Activated T-helper 1 cell treated with anti-CD3 and anti-CD28 coated beads, Interleukin-12 subunit alpha, Interleukin-12 subunit beta, Interleukin-2, Interleukin-4 antibody, amounts not matched to agents 30 ng/mL and 10 ng/mL and 1 ng/mL, durations not matched to agents 14 hours and 24 hours and 36 hours (primary cell): ENCODE measurements at regions of chr4 and their contacts with region 1.

Region 1: DNA sequence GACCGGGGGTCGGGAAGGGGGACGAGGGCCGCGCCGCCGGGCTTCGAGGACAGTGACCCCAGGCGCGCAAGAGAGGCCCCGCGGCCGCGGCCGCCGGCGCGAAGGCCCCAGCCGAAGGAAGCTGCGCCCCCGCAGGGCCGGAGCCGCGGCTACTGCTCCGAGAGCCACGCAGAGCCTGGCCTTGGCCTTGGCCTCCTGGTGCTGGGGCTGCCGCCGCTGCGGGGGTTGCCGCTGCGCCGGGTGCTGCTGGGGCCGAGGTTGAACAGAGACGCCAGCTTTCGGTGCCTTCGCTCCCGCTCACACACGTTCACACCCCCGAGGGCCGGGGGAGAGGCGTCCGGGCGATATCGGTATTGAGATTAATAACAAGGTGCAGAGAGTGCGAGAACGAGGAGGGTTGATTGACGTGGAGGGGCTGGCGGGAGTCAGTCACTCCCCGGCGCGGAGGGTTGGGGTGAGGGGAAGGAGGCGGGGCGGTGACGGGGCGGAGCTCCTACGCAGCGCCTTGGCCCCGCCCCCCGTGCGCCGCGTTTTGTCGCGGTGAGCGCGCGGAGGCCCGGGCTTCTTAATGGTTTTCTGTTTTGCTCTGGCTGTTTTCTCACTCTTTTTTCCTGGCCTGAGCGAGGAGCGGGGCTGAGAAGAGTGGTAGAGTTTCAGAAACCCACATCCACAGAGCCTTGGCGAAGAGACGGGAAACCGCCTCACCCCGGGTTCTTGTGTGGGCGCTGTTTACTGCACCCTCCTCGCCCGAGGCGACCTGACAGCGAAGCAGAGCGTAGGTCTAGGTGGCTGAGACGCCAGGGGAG is 878 bp upstream of the CNOT6L start:
- DNase-seq: peak; percentile 92
- H3K4me3 Mint-ChIP-seq: peak overlapping the region; percentile 91
- H3K27ac Mint-ChIP-seq: peak overlapping the region; percentile 99
- H3K4me1 Mint-ChIP-seq: peaks cover 47% of the 10 kb centered on the region
- H3K27me3 Mint-ChIP-seq: peaks cover 5% of the 10 kb centered on the region

Region 2: DNA sequence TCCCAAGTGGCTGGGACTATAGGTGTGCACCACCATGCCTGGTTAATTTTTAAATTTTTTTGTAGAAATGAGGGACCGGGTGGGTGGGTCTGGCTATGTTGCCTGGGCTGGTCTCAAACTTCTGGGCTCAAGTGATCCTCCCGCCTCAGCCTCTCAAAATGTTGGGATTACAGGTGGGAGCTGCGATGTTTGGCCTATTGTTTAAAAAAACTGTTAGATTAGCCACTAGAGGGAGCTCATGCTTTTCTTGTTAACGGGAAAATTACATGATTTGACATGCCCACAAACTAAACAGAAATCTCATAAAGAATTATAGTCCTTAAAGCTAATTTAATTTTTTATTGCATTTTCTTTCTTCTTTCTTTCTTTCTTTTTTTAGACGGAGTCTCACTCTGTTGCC is 1824.3 kb before region 1 on chr4:
- intact Hi-C with region 1: loop called (anchors 10 kb)
- DNase-seq: no peak
- H3K4me3 Mint-ChIP-seq: no peak overlapping the region
- H3K27ac Mint-ChIP-seq: no peak overlapping the region
- H3K4me1 Mint-ChIP-seq: no peaks in the 10 kb centered on the region
- H3K27me3 Mint-ChIP-seq: peaks cover 2% of the 10 kb centered on the region

Region 3: GRCh38 chr4:77728420-77728819 is 91.6 kb before region 1 on chr4:
- intact Hi-C with region 1: no loop called
- DNase-seq: no peak
- H3K4me3 Mint-ChIP-seq: no peak overlapping the region
- H3K27ac Mint-ChIP-seq: no peak overlapping the region
- H3K4me1 Mint-ChIP-seq: peaks cover 45% of the 10 kb centered on the region
- H3K27me3 Mint-ChIP-seq: no peaks in the 10 kb centered on the region

Region 4: GRCh38 chr4:77777135-77777807 is 42.8 kb before region 1 on chr4:
- intact Hi-C with region 1: loop called (anchors 5 kb)
- DNase-seq: no peak
- H3K4me3 Mint-ChIP-seq: no peak overlapping the region
- H3K27ac Mint-ChIP-seq: no peak overlapping the region
- H3K4me1 Mint-ChIP-seq: peaks cover 36% of the 10 kb centered on the region
- H3K27me3 Mint-ChIP-seq: no peaks in the 10 kb centered on the region

Region 5: GRCh38 chr4:77843628-77844027 is 23.6 kb after region 1 on chr4:
- intact Hi-C with region 1: loop called (anchors 1 kb)
- DNase-seq: no peak
- H3K4me3 Mint-ChIP-seq: peak overlapping the region; percentile 23
- H3K27ac Mint-ChIP-seq: peak overlapping the region; percentile 78
- H3K4me1 Mint-ChIP-seq: peaks cover 26% of the 10 kb centered on the region
- H3K27me3 Mint-ChIP-seq: no peaks in the 10 kb centered on the region

Region 6: GRCh38 chr4:77862478-77863216 is 42.6 kb after region 1 on chr4 and contains the start of gene MRPL1:
- intact Hi-C with region 1: loop called (anchors 1 kb)
- DNase-seq: peak; percentile 84
- H3K4me3 Mint-ChIP-seq: peak within 1 kb of the TSS; percentile 90
- H3K27ac Mint-ChIP-seq: peak within 1 kb of the TSS; percentile 94
- H3K4me1 Mint-ChIP-seq: peaks cover 48% of the 10 kb centered on the region
- H3K27me3 Mint-ChIP-seq: no peaks in the 10 kb centered on the region
- total RNA-seq, gene MRPL1: 72.7 and 75.0 TPM in 2 replicates

Region 7: DNA sequence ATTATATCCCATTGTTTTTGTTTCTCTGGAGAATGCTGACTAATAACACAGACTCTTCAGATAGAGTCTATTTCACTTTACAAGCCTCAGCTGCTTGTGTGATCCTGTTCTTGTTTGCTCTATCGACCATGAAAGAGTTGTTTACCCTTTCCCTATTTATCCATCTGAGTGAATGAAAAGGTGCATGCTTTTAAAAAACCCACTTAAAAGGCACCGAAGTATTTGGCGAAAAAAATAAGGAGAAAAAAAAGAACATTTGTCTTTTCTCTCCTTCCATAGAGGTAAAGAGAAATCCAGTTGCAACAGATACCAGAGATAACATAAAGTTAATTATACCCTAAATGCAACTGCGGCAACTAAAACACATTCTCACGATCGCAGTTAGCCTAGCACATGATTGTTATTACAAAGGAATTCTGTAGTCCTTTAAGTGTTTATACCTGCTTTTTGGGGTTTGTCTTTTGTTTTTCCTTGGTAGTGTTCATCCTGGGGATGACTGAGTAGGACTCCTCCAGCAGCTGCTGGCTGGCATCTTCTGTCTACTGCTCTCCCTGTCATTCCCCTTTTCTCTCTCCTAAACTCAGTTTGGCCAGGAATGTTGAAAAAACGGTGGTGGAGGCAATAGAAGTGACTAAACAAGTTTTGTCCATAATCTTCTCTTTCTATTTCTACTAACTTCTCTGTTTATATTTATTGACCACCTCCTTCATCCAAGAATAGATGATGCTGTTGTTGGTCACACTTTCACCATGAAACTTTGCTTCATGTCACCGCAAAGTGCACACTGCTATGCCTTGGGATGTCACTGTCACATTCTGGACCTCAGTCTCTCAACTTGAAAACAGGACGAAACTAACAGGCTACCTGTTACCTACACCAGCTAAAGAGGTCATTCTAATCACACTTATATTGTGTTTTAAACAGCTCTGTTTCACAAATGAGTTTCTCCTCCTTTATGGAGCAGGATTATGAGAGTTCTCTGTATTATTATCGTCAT is 195.1 kb after region 1 on chr4:
- intact Hi-C with region 1: no loop called
- DNase-seq: no peak
- H3K4me3 Mint-ChIP-seq: no peak overlapping the region
- H3K27ac Mint-ChIP-seq: no peak overlapping the region
- H3K4me1 Mint-ChIP-seq: no peaks in the 10 kb centered on the region
- H3K27me3 Mint-ChIP-seq: peaks cover 5% of the 10 kb centered on the region

Region 8: DNA sequence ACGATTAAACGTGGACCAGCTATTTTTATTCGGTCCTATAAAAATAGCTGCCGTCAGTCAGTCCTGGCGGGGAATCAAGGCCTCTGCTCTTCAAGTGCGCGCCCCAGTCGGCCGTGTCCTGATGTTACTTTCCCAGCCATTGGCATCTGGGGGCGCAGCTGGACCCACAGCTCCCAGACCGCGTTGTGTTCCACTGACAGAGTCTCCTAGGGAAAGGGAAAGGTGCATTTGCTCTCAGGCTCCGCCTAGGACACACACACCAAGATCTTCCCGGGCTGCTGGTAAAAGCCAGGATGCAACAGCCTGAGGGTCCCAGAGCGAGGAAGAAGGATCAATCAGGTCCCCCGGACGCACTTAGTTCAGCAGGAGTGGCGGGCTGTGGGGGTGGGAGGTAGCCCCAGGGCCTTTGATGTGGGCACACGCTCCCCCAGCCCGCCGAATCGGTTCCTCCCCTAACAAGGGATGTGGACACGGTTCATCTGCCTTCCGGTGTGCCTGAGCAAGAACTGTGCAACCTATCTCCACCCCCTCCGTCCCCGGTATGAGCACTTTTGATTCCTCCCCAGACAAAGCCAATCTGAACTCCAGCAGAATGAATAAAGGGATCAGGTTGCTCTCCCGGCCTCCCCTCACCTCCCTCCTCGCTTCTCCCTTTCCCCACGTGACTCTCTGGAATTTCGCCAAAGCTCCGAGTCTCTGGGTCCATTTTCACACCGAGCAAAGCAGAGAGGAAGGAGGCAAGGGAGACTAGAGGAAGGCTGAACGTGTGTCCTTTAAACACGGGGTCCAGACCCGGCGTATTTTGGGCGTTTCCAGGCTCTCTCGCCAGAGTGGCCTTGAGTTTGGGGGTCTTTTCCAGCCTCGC is 236.5 kb after region 1 on chr4:
- intact Hi-C with region 1: no loop called
- DNase-seq: no peak
- H3K4me3 Mint-ChIP-seq: peak overlapping the region; percentile 82
- H3K27ac Mint-ChIP-seq: no peak overlapping the region
- H3K4me1 Mint-ChIP-seq: peaks cover 30% of the 10 kb centered on the region
- H3K27me3 Mint-ChIP-seq: peaks cover 65% of the 10 kb centered on the region

Region 9: DNA sequence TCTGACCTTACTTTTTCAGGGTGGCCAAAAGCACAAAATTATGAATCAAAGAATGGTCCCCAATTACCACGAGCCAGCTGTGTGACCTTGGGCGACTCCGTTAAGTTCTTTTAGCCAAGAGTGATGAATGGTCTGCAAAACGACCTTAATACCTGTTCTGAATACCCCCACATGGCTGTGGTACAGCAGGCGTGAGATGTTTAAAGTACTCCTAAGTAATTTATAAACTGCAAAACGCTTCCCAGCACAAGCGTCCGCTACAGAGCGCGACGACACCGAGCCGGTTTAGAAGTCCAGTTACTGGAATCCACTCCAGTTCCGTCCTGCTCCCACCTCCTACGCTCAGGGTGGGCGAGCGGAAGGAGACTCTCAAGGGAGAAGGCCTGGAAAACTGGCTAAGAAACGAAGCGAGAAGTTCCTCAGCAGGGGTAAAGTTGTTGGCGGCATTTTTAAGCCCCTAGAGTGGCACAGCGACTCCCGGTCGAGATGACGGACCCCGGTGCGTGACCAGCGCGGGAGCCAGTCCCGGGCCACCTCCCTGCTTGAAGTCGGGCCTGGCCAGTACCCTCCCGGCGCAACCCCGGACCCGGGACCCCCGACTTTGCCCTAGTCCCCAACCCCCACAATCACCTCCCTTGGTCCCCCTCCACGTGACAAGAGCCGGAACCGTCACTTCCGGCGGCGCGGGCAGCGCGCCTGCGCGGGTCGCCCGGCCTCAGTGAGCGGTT is 955.4 kb after region 1 on chr4:
- intact Hi-C with region 1: loop called (anchors 5 kb)
- DNase-seq: peak; percentile 86
- H3K4me3 Mint-ChIP-seq: peak overlapping the region; percentile 95
- H3K27ac Mint-ChIP-seq: peak overlapping the region; percentile 96
- H3K4me1 Mint-ChIP-seq: peaks cover 38% of the 10 kb centered on the region
- H3K27me3 Mint-ChIP-seq: no peaks in the 10 kb centered on the region